CD8-positive, alpha-beta memory T cell (primary cell): ENCODE measurements at regions of chr16 and their contacts with region 1.

Region 1: DNA sequence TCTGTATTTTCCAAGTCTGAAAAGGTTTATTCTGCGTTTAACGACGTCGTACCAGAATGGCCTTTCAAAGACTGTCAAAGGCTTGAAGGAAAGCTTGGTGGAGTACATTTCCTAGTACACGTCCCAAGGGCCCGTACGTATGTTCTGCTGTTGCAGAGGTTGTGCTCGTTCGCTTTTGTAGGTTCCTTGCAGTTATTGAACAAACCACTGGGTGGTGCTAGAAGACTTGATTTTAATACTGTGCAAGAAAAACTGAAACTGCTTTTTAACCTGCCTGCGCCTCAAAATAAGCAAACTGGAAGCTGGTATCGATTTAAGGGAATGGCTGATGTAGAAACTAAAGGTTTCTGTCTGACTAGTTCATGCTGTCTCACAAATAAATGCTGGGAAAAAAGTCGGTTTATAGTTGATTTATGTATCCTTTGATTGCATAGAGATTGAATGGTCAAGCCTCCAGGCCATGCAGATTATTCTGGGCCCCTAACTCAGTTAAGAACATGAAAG is 54.6 kb downstream of the USP10 start:
- DNase-seq: peak; percentile 36 to 78 (median 69)
- H3K4me3 ChIP-seq: peak overlapping the region; percentile 21
- H3K4me3 Mint-ChIP-seq: peak overlapping the region in 6 of 7 donors; percentile 51 to 78 (median 64)
- H3K27ac ChIP-seq: peak overlapping the region; percentile 21
- H3K27ac Mint-ChIP-seq: peak overlapping the region; percentile 18 to 88 (median 48)
- H3K4me1 ChIP-seq: peaks cover 47% of the 10 kb centered on the region
- H3K4me1 Mint-ChIP-seq: peaks cover 69 to 92% (median 91%) of the 10 kb centered on the region in 3 donors
- H3K27me3 ChIP-seq: no peaks in the 10 kb centered on the region
- H3K27me3 Mint-ChIP-seq: no peaks in the 10 kb centered on the region

Region 2: DNA sequence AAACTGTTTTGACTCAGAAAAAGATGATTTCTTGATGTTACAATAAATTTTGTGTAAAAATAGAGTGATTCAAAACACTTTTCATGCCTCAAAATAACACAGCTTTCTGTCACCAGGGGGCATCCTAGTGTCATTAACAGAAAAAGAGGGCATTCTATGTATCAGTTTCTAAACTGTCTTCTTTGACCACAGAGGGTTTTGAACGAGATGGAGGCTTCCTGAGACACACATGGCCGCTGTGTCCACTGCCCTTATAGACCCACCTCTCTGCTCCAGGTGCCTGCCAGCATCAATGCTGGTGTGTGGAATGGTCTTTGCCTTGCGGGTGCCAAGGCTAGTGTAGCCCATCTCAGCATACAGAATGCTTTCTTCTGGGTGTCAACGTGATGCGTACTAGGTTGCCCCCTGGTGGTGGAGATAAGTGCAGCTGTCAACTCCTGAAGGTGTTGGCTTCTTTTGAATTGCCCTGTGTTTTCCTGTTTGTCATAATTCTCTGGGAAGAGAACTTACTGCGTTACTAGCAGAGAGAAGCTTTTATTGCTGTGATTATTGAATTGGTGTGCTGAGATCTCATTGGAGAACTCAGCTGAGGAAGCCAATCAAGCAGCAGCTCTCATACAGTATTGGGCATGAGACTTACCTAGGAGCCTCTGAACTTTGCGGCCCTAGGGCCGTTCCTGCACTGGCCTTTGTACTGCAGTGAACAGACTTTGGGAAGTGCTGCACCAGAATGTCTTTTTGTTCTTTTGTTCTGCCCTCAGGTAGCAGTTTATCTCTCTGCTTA is 16.0 kb before region 1 on chr16:
- CTCF ChIA-PET with region 1: interaction called, 46 read pairs
- POLR2A ChIA-PET with region 1: no interaction called
- DNase-seq: peak; percentile 60 to 81 (median 67)
- H3K4me3 ChIP-seq: peak overlapping the region; percentile 44
- H3K4me3 Mint-ChIP-seq: peak overlapping the region in 6 of 7 donors; percentile 60 to 80 (median 75)
- H3K27ac ChIP-seq: no peak overlapping the region
- H3K27ac Mint-ChIP-seq: peak overlapping the region; percentile 1 to 89 (median 64)
- H3K4me1 ChIP-seq: peaks cover 26% of the 10 kb centered on the region
- H3K4me1 Mint-ChIP-seq: peaks cover 31 to 60% (median 51%) of the 10 kb centered on the region in 3 donors
- H3K27me3 ChIP-seq: no peaks in the 10 kb centered on the region
- H3K27me3 Mint-ChIP-seq: peaks cover 0 to 1% of the 10 kb centered on the region in 2 donors

Region 3: GRCh38 chr16:84768061-84768807 is 13.8 kb after region 1 on chr16:
- CTCF ChIA-PET with region 1: interaction called, 10 read pairs
- POLR2A ChIA-PET with region 1: no interaction called
- DNase-seq: peak in 1 of 5 donors; percentile 50
- H3K4me3 ChIP-seq: no peak overlapping the region
- H3K4me3 Mint-ChIP-seq: peak overlapping the region in 5 of 7 donors; percentile 26 to 70 (median 36)
- H3K27ac ChIP-seq: no peak overlapping the region
- H3K27ac Mint-ChIP-seq: peak overlapping the region in 6 of 8 donors; percentile 11 to 83 (median 59)
- H3K4me1 ChIP-seq: peaks cover 29% of the 10 kb centered on the region
- H3K4me1 Mint-ChIP-seq: peaks cover 17 to 40% (median 24%) of the 10 kb centered on the region in 3 donors
- H3K27me3 ChIP-seq: no peaks in the 10 kb centered on the region
- H3K27me3 Mint-ChIP-seq: no peaks in the 10 kb centered on the region

Region 4: DNA sequence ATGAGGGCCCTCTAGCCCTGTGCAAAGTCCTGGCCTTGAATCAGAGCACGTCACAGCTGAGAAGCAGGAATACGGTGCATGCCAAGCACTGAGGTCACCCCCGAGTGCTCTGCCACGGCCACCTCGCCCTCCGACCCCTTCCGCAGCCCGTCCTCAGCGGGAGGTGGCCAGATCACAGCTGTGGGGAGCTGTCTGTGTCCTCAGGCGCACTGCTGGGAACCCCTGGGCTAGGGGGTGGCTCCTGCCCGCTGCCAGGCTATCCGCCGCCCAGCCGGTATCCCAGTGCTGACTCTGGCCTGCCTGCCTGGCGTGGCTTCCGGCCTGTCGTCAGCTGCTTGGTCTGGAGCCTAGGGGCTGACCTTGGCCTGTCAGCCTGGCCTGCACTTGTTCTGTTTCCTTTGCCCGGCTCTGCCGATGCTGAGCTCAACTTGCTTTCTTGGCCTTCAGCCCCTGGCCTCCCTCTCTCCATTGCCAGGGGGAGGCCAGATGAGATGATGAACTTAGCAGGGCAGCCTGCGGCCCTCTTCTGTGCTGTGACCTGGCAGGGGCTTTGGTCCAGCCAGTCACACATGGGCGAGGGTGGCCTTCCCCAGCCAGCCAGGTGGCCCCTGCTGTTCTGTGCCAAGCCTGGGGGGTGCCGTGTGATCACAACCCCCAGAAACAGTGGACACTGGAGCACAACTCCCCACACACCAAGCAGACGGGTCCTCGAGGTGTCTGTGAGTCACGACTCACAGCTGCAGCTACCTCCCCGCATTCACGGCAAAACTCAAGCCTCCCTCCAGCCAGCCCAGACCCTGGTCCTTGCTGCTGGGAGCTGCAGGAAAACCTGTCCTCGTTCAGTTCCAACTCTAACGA is 179.6 kb after region 1 on chr16:
- CTCF ChIA-PET with region 1: no interaction called
- POLR2A ChIA-PET with region 1: no interaction called
- DNase-seq: no peak
- H3K4me3 ChIP-seq: no peak overlapping the region
- H3K4me3 Mint-ChIP-seq: no peak overlapping the region
- H3K27ac ChIP-seq: no peak overlapping the region
- H3K27ac Mint-ChIP-seq: no peak overlapping the region
- H3K4me1 ChIP-seq: peaks cover 4% of the 10 kb centered on the region
- H3K4me1 Mint-ChIP-seq: peaks cover 0 to 2% (median 0%) of the 10 kb centered on the region in 3 donors
- H3K27me3 ChIP-seq: no peaks in the 10 kb centered on the region
- H3K27me3 Mint-ChIP-seq: peaks cover 0 to 4% of the 10 kb centered on the region in 2 donors

Region 5: GRCh38 chr16:84952335-84953189 is 198.2 kb after region 1 on chr16:
- CTCF ChIA-PET with region 1: interaction called, 66 read pairs
- POLR2A ChIA-PET with region 1: no interaction called
- DNase-seq: peak; percentile 46 to 71 (median 58)
- H3K4me3 ChIP-seq: no peak overlapping the region
- H3K4me3 Mint-ChIP-seq: no peak overlapping the region
- H3K27ac ChIP-seq: peak overlapping the region; percentile 51
- H3K27ac Mint-ChIP-seq: no peak overlapping the region
- H3K4me1 ChIP-seq: peaks cover 9% of the 10 kb centered on the region
- H3K4me1 Mint-ChIP-seq: peaks cover 0 to 8% (median 2%) of the 10 kb centered on the region in 3 donors
- H3K27me3 ChIP-seq: no peaks in the 10 kb centered on the region
- H3K27me3 Mint-ChIP-seq: peaks cover 4 to 7% of the 10 kb centered on the region in 2 donors

Region 6: DNA sequence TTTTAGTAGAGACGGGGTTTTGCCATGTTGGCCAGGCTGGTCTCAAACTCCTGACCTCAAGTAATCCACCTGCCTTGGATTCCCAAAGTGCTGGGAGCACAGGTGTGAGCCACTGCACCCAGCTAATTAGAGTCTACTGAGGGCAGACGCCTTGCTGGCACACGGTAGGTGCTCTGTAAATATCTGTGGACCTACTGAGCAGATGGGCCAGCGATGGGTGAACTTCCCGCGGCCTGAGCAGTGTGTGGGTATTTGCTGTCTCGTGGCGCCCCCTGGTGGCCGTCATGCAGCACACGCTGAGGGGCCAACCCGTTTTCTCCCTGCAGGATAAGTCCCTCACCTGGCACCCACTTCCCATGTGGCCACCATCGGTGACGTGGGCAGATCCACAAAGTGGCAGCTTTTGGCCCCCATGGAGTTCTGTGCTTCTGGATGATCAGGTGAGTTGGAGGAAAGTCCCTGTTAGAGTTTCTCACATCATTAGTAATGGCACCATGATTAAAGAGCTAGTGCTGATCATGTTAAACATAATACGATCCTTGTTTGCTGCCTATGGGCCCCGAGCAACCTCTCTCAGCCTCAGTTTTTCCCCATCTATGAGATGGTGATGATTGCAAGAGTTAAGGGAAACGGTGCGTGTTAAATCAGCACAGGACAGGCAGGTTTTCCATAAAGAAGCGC is 216.2 kb after region 1 on chr16:
- CTCF ChIA-PET with region 1: interaction called, 23 read pairs
- POLR2A ChIA-PET with region 1: no interaction called
- DNase-seq: peak; percentile 64 to 78 (median 67)
- H3K4me3 ChIP-seq: no peak overlapping the region
- H3K4me3 Mint-ChIP-seq: no peak overlapping the region
- H3K27ac ChIP-seq: no peak overlapping the region
- H3K27ac Mint-ChIP-seq: peak overlapping the region in 5 of 8 donors; percentile 7 to 51 (median 16)
- H3K4me1 ChIP-seq: no peaks in the 10 kb centered on the region
- H3K4me1 Mint-ChIP-seq: peaks cover 2 to 5% (median 5%) of the 10 kb centered on the region in 3 donors
- H3K27me3 ChIP-seq: no peaks in the 10 kb centered on the region
- H3K27me3 Mint-ChIP-seq: peaks cover 0 to 3% of the 10 kb centered on the region in 2 donors